Natural killer cell (primary cell): ENCODE measurements at regions of chr17 and their contacts with region 1.

Region 1: GRCh38 chr17:82418001-82418986 is at the starts of genes HEXD and OGFOD3:
- DNase-seq: peak; percentile 89 to 94
- ATAC-seq: peak; percentile 86 to 95 (median 87)
- H3K4me3 ChIP-seq: peak within 1 kb of the TSS; percentile 84
- H3K4me3 Mint-ChIP-seq: peak within 1 kb of the TSS; percentile 92
- H3K27ac ChIP-seq: peak within 1 kb of the TSS; percentile 72
- H3K27ac Mint-ChIP-seq: peak within 1 kb of the TSS; percentile 84 to 92
- H3K4me1 ChIP-seq: peaks cover 21% of the 10 kb centered on the region
- H3K4me1 Mint-ChIP-seq: peaks cover 32 to 36% of the 10 kb centered on the region in 2 donors
- H3K27me3 ChIP-seq: no peaks in the 10 kb centered on the region
- H3K27me3 Mint-ChIP-seq: no peaks in the 10 kb centered on the region
- CTCF ChIP-seq: no peak
- total RNA-seq, gene HEXD: 35.7 to 57.4 (median 51.5) TPM
- total RNA-seq, gene OGFOD3: 21.6 to 28.6 (median 23.3) TPM

Region 2: GRCh38 chr17:82205719-82206508 is 212.4 kb before region 1 on chr17:
- intact Hi-C with region 1: no loop called
- DNase-seq: peak; percentile 75 to 91
- ATAC-seq: peak; percentile 84 to 88 (median 85)
- H3K4me3 ChIP-seq: no peak overlapping the region
- H3K4me3 Mint-ChIP-seq: peak overlapping the region; percentile 37
- H3K27ac ChIP-seq: peak overlapping the region; percentile 84
- H3K27ac Mint-ChIP-seq: peak overlapping the region; percentile 88 to 90
- H3K4me1 ChIP-seq: peaks cover 46% of the 10 kb centered on the region
- H3K4me1 Mint-ChIP-seq: peaks cover 23 to 45% of the 10 kb centered on the region in 2 donors
- H3K27me3 ChIP-seq: no peaks in the 10 kb centered on the region
- H3K27me3 Mint-ChIP-seq: no peaks in the 10 kb centered on the region
- CTCF ChIP-seq: peak; percentile 89

Region 3: DNA sequence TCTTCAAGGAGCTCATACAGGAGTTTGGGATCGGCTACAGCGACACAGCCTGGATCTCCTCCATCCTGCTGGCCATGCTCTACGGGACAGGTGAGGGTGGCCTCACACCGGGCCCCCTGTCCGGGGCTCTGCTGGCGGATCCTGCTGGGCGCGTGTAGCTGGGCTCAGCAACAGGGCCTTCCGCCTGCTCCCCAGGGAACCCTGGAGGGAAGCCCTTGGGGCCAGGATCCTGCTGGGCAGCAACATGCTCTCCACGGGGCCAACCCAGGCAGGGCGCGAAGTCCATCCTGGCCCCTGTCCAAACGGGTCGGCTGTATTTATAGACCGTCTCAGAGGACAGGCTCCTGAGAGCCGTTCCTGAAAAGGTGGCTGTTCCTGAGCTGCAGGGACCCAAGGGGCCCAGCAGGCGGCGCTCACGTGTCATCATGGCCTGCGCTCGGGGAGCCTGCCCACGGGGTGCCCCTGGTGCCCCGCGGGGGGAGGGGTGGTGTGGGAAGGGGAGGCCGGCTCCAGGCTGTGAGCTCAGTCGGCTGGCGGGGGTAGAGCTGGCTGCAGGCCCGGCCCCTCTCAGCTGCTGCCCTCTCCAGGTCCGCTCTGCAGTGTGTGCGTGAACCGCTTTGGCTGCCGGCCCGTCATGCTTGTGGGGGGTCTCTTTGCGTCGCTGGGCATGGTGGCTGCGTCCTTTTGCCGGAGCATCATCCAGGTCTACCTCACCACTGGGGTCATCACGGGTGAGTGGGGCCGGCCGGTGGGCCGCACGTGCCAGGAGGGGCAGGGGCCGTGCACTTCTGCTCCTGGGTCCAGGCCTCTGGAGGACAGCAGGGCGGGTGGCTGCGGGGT is 181.9 kb before region 1 on chr17:
- intact Hi-C with region 1: loop called (anchors 10 kb)
- DNase-seq: peak; percentile 72 to 86
- ATAC-seq: peak; percentile 44 to 57 (median 46)
- H3K4me3 ChIP-seq: no peak overlapping the region
- H3K4me3 Mint-ChIP-seq: no peak overlapping the region
- H3K27ac ChIP-seq: peak overlapping the region; percentile 27
- H3K27ac Mint-ChIP-seq: peak overlapping the region; percentile 58 to 72
- H3K4me1 ChIP-seq: peaks cover 70% of the 10 kb centered on the region
- H3K4me1 Mint-ChIP-seq: peaks cover 27 to 56% of the 10 kb centered on the region in 2 donors
- H3K27me3 ChIP-seq: no peaks in the 10 kb centered on the region
- H3K27me3 Mint-ChIP-seq: no peaks in the 10 kb centered on the region
- CTCF ChIP-seq: peak; percentile 82

Region 4: GRCh38 chr17:82273327-82274133 is 144.8 kb before region 1 on chr17 and contains the start of gene CSNK1D:
- intact Hi-C with region 1: no loop called
- DNase-seq: peak; percentile 93 to 95
- ATAC-seq: peak; percentile 80 to 90 (median 81)
- H3K4me3 ChIP-seq: peak within 1 kb of the TSS; percentile 53
- H3K4me3 Mint-ChIP-seq: peak within 1 kb of the TSS; percentile 91
- H3K27ac ChIP-seq: peak within 1 kb of the TSS; percentile 83
- H3K27ac Mint-ChIP-seq: peak within 1 kb of the TSS; percentile 87 to 91
- H3K4me1 ChIP-seq: peaks cover 49% of the 10 kb centered on the region
- H3K4me1 Mint-ChIP-seq: peaks cover 37 to 43% of the 10 kb centered on the region in 2 donors
- H3K27me3 ChIP-seq: no peaks in the 10 kb centered on the region
- H3K27me3 Mint-ChIP-seq: no peaks in the 10 kb centered on the region
- CTCF ChIP-seq: no peak
- total RNA-seq, gene CSNK1D: 423 to 475 (median 468) TPM

Region 5: GRCh38 chr17:82351716-82352488 is 66.4 kb before region 1 on chr17:
- intact Hi-C with region 1: loop called (anchors 5 kb)
- DNase-seq: peak; percentile 76 to 94
- ATAC-seq: peak; percentile 63 to 83 (median 64)
- H3K4me3 ChIP-seq: no peak overlapping the region
- H3K4me3 Mint-ChIP-seq: no peak overlapping the region
- H3K27ac ChIP-seq: no peak overlapping the region
- H3K27ac Mint-ChIP-seq: no peak overlapping the region
- H3K4me1 ChIP-seq: peaks cover 28% of the 10 kb centered on the region
- H3K4me1 Mint-ChIP-seq: peaks cover 0 to 20% of the 10 kb centered on the region in 2 donors
- H3K27me3 ChIP-seq: no peaks in the 10 kb centered on the region
- H3K27me3 Mint-ChIP-seq: peaks cover 0 to 6% of the 10 kb centered on the region in 2 donors
- CTCF ChIP-seq: peak; percentile 97

Region 6: GRCh38 chr17:82450170-82451106 is 32.1 kb after region 1 on chr17 and contains the start of gene CYBC1:
- intact Hi-C with region 1: loop called (anchors 1 kb)
- DNase-seq: peak; percentile 94 to 96
- ATAC-seq: peak; percentile 76 to 93 (median 80)
- H3K4me3 ChIP-seq: peak within 1 kb of the TSS; percentile 93
- H3K4me3 Mint-ChIP-seq: peak within 1 kb of the TSS; percentile 97
- H3K27ac ChIP-seq: peak within 1 kb of the TSS; percentile 95
- H3K27ac Mint-ChIP-seq: peak within 1 kb of the TSS; percentile 96
- H3K4me1 ChIP-seq: peaks cover 45% of the 10 kb centered on the region
- H3K4me1 Mint-ChIP-seq: peaks cover 25 to 44% of the 10 kb centered on the region in 2 donors
- H3K27me3 ChIP-seq: no peaks in the 10 kb centered on the region
- H3K27me3 Mint-ChIP-seq: no peaks in the 10 kb centered on the region
- CTCF ChIP-seq: no peak
- total RNA-seq, gene CYBC1: 168 to 219 (median 192) TPM

Region 7: DNA sequence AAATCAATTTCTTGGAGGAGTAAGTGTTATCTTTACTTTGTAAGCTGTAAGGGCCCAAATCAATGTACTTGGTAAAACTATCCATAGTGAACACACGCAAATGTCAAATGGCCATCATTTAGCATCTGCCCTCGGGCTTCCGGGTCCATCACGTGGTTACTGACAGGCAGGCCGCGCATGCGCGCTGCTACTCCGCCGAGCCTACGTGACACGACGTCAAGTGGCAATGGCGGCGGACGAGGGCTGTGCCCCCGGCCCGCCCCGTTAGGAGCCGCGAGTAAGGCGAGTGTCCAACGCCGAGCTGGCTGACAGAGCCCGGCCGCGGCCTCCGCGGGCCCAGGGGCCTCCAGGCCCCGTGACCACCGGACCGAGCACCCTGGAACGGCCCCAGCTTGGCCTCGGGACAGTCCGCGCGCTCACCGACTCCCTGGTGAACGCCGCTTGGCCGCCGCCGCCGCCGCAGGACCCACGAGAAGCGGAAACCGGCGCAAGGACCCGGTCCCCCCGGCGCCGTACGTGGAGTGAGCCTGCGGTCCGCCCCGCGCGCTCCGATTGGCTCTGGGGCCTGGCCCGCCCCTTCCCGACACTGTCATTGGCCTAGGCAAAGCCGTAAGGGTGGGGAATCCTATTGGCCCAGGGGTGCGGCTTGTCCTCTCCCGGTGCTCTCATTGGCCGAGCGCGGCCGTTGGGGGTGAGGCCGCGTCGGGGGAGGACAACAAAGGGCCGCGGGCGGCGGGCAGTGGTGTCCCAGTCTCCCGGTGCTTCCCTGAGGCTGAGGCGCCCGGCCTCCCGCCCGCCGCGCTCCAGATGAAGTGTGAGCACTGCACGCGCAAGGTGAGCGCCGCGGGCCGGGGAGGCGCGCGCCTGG is 39.9 kb after region 1 on chr17 and contains the start of gene NARF:
- intact Hi-C with region 1: loop called (anchors 2 kb)
- DNase-seq: peak; percentile 93 to 98
- ATAC-seq: peak; percentile 89 to 99 (median 92)
- H3K4me3 ChIP-seq: peak within 1 kb of the TSS; percentile 61
- H3K4me3 Mint-ChIP-seq: peak within 1 kb of the TSS; percentile 96
- H3K27ac ChIP-seq: peak within 1 kb of the TSS; percentile 97
- H3K27ac Mint-ChIP-seq: peak within 1 kb of the TSS; percentile 97 to 99
- H3K4me1 ChIP-seq: peaks cover 18% of the 10 kb centered on the region
- H3K4me1 Mint-ChIP-seq: peaks cover 35 to 37% of the 10 kb centered on the region in 2 donors
- H3K27me3 ChIP-seq: no peaks in the 10 kb centered on the region
- H3K27me3 Mint-ChIP-seq: no peaks in the 10 kb centered on the region
- CTCF ChIP-seq: no peak
- total RNA-seq, gene NARF: 130 to 203 (median 158) TPM